ENCODE measurements at regions of chr5 and their contacts with region 1.

Region 1: GRCh38 chr5:75511435-75512384 is at the starts of genes CERT1 and POLK:
- DNase-seq: peak; percentile 97 to 99
- ATAC-seq: peak; percentile 97 to 99 (median 98)
- H3K4me3 ChIP-seq: peak within 1 kb of the TSS; percentile 68 to 93 (median 86)
- H3K27ac ChIP-seq: peak within 1 kb of the TSS; percentile 84 to 96 (median 94)
- H3K4me1 ChIP-seq: peaks cover 0 to 61% (median 52%) of the 10 kb centered on the region in 9 donors
- H3K27me3 ChIP-seq: no peaks in the 10 kb centered on the region
- CTCF ChIP-seq: no peak
- total RNA-seq, gene CERT1: 23.1 to 47.6 (median 37.9) TPM
- total RNA-seq, gene POLK: 18.4 to 27.2 (median 23.8) TPM

Region 2: GRCh38 chr5:75336625-75337339 is 174.9 kb before region 1 on chr5 and contains the start of gene HMGCR:
- intact Hi-C with region 1: loop called in 2 of 10 experiments (anchors 10 kb)
- DNase-seq: peak; percentile 97 to 99
- ATAC-seq: peak; percentile 99 to 100 (median 99)
- H3K4me3 ChIP-seq: peak within 1 kb of the TSS; percentile 72 to 99 (median 90)
- H3K27ac ChIP-seq: peak within 1 kb of the TSS; percentile 37 to 95 (median 90)
- H3K4me1 ChIP-seq: peaks cover 2 to 28% (median 18%) of the 10 kb centered on the region in 9 donors
- H3K27me3 ChIP-seq: no peaks in the 10 kb centered on the region
- CTCF ChIP-seq: peak in 5 of 9 donors; percentile 5 to 53 (median 41)
- total RNA-seq, gene HMGCR: 9.8 to 16.3 (median 11.4) TPM

Region 3: DNA sequence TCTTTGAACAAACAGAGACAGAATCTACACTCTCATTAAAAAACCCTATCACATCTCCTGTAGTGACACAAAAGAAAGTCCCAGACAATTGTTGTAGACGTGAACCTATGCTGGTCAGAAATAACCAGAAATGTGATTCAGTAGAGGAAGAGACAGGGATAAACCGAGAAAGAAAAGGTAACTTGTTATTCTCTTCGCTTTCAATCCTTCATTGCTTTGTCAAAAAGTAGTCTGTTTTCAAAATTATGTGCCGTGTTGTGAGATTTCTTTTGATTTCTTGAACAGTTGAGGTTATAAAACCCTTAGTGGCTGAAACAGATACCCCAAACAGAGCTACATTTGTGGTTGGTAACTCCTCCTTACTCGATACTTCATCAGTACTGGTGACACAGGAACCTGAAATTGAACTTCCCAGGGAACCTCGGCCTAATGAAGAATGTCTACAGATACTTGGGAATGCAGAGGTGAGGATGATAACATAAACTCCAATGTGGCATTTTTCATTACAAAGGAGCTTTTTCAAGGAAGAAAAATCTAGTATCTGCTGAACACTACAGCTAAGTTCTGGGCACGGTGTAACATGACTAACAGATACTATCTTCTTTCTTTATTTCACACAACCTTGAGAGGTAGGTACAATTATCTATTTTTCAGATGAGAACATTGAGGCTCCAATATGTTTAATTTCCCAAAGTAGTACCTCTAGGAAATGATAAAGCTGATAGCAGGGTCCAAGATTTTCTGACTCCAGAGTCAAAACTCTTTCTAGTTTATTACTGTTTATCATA is 160.4 kb before region 1 on chr5:
- intact Hi-C with region 1: loop called in 1 of 10 experiments (anchors 10 kb)
- DNase-seq: no peak
- ATAC-seq: no peak
- H3K4me3 ChIP-seq: no peak overlapping the region
- H3K27ac ChIP-seq: no peak overlapping the region
- H3K4me1 ChIP-seq: no peaks in the 10 kb centered on the region
- H3K27me3 ChIP-seq: no peaks in the 10 kb centered on the region
- CTCF ChIP-seq: no peak

Region 4: DNA sequence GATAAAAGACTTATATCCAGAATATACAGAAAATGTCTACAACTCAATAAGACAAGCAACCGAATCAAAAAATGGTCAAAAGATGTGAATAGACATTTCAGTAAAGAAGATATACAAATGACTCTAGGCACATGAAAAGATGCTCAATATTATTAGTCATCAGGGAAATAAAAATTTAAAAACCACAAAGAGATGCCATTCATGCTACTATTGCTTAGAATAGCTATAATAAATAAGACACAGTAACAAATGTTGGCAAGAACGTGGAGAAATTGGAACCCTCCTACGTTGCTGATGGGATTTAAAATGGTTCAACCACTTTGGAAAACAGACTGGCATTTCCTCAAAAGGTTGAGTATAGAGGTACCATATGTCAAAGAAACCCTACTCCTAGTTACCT is 39.8 kb after region 1 on chr5:
- intact Hi-C with region 1: loop called in 1 of 10 experiments (anchors 5 kb)
- DNase-seq: no peak
- ATAC-seq: no peak
- H3K4me3 ChIP-seq: no peak overlapping the region
- H3K27ac ChIP-seq: no peak overlapping the region
- H3K4me1 ChIP-seq: peaks cover 0 to 9% (median 0%) of the 10 kb centered on the region in 9 donors
- H3K27me3 ChIP-seq: no peaks in the 10 kb centered on the region
- CTCF ChIP-seq: no peak

Region 5: DNA sequence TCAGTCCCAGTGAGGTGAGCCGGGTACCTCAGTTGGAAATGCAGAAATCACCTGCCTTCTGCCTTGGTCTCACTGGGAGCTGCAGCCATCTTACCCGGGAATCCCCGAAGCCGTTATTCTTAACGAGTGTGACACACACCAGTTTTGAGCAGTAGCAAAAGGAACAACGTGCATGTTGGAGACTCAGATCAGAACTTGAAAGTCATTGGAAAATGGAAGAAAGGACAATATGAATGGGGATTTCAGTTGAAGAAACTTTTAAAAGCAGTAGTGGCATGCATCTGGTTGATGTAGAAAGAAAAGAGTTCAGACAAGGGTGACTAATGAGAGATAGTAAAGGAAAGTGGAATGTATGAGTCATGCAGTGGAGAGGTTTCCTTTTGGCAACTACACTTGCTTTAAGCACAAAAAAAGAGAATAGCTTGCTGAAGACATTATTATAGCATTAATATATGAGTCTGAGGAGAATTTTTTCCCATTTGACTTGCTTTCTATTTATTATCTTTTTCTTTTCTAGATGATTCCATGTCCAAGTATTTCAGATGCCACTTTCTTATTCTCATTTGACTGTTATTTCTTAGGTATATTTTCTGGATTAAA is 55.1 kb after region 1 on chr5:
- intact Hi-C with region 1: loop called in 4 of 10 experiments (anchors 5 to 10 kb)
- DNase-seq: peak in 1 of 2 donors; percentile 21
- ATAC-seq: peak; percentile 86 to 99 (median 97)
- H3K4me3 ChIP-seq: peak overlapping the region in 2 of 10 donors; percentile 0 to 2
- H3K27ac ChIP-seq: peak overlapping the region in 9 of 10 donors; percentile 65 to 80 (median 70)
- H3K4me1 ChIP-seq: peaks cover 9 to 49% (median 30%) of the 10 kb centered on the region in 9 donors
- H3K27me3 ChIP-seq: no peaks in the 10 kb centered on the region
- CTCF ChIP-seq: no peak

Region 6: DNA sequence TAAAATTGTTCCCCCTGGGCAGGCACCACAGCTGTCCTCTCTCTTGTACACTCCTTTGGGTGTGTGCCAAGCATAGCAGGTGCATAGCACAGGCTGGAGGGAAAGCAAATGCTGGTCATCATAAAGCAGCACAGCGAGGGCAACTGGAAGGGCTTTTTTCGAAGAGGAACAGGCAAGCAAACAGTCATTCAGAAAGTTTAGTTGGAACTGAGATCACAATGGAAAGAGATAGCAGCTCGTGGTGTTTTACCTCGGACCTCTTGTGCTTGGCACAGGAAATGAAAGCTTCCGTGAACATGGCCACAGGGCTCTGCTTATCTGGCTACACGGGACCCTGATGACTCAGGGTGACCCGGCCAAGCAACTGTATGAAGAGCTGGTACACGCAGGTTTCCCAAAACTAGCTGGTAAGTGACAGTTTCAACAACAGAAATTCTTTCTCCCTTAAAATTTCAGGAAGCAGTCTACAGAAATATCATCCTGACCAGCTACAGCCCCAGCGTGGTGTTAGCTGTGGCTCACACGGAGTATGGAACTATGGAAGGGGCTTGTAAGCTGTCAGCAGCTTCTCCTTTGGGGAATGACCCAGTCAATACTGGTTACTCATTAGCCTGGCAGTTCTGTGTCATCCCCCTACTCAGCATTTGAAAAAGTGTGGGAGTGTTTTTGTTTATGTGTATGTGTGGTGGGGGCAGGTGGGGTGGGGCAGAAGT is 157.4 kb after region 1 on chr5:
- intact Hi-C with region 1: loop called in 2 of 10 experiments (anchors 10 kb)
- DNase-seq: peak in 1 of 2 donors; percentile 29
- ATAC-seq: peak; percentile 64 to 90 (median 73)
- H3K4me3 ChIP-seq: peak overlapping the region in 6 of 10 donors; percentile 18 to 39 (median 26)
- H3K27ac ChIP-seq: peak overlapping the region in 3 of 10 donors; percentile 1 to 45 (median 21)
- H3K4me1 ChIP-seq: peaks cover 0 to 21% (median 12%) of the 10 kb centered on the region in 9 donors
- H3K27me3 ChIP-seq: no peaks in the 10 kb centered on the region
- CTCF ChIP-seq: no peak

Region 7: GRCh38 chr5:75681125-75681830 is 169.6 kb after region 1 on chr5:
- intact Hi-C with region 1: loop called in 2 of 10 experiments (anchors 10 kb)
- DNase-seq: no peak
- ATAC-seq: peak in 2 of 8 donors; percentile 16 to 37
- H3K4me3 ChIP-seq: no peak overlapping the region
- H3K27ac ChIP-seq: peak overlapping the region in 1 of 10 donors; percentile 1
- H3K4me1 ChIP-seq: peaks cover 0 to 12% (median 0%) of the 10 kb centered on the region in 9 donors
- H3K27me3 ChIP-seq: no peaks in the 10 kb centered on the region
- CTCF ChIP-seq: peak; percentile 60 to 89 (median 78)